ENCODE measurements at regions of chr14 and their contacts with region 1.

Region 1: GRCh38 chr14:20970983-20971704 is 15.9 kb downstream of the RNASE2 start:
- DNase-seq: peak; percentile 65 to 80 (median 72)
- H3K4me3 ChIP-seq: peak overlapping the region; percentile 91
- H3K4me3 Mint-ChIP-seq: peak overlapping the region; percentile 89 to 95 (median 93)
- H3K27ac ChIP-seq: no peak overlapping the region
- H3K27ac Mint-ChIP-seq: peak overlapping the region in 7 of 8 donors; percentile 13 to 84 (median 76)
- H3K4me1 ChIP-seq: peaks cover 6% of the 10 kb centered on the region
- H3K4me1 Mint-ChIP-seq: peaks cover 13 to 17% (median 14%) of the 10 kb centered on the region in 3 donors
- H3K27me3 ChIP-seq: no peaks in the 10 kb centered on the region
- H3K27me3 Mint-ChIP-seq: peaks cover 28 to 45% of the 10 kb centered on the region in 2 donors

Region 2: GRCh38 chr14:20690848-20691523 is 280.2 kb before region 1 on chr14:
- CTCF ChIA-PET with region 1: interaction called, 12 read pairs
- POLR2A ChIA-PET with region 1: no interaction called
- DNase-seq: peak in 4 of 5 donors; percentile 18 to 65 (median 54)
- H3K4me3 ChIP-seq: no peak overlapping the region
- H3K4me3 Mint-ChIP-seq: peak overlapping the region in 1 of 7 donors; percentile 7
- H3K27ac ChIP-seq: no peak overlapping the region
- H3K27ac Mint-ChIP-seq: peak overlapping the region in 1 of 8 donors; percentile 12
- H3K4me1 ChIP-seq: no peaks in the 10 kb centered on the region
- H3K4me1 Mint-ChIP-seq: peaks cover 4 to 6% (median 5%) of the 10 kb centered on the region in 3 donors
- H3K27me3 ChIP-seq: no peaks in the 10 kb centered on the region
- H3K27me3 Mint-ChIP-seq: peaks cover 7 to 8% of the 10 kb centered on the region in 2 donors

Region 3: DNA sequence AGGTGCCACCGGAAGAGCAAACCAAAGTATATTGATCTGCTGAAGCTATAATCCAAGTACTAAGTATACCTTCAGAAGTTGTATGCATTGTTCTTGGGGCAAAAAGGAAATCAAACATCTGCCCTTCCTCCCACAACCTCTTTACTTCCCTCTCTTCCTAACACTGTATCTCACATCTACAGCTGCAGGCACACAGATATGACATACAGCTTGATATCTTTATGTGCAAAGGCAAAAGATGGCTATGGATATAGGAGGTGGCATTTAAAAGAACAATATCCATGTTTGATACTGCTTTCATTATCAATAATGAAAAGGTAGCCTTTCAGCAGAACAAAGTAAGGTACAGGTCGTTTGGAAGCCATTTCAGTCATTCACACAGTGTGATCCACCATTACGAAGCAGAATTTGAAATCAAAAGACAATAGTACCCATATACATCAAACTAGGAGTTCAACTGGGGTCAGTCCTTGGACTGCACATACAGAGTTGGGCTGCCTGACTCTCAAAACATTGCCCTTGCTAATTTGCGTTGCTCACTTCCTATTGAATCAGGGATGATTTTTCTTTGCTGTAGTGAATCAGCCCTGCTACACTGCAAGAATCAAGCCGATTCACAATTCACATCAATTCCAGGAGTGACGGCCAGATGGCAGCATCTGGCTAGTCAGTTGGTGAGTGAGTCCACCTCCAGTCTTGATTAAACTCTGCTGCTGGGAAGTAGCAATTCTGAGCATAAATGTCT is 273.7 kb before region 1 on chr14:
- CTCF ChIA-PET with region 1: interaction called, 12 read pairs
- POLR2A ChIA-PET with region 1: no interaction called
- DNase-seq: peak; percentile 41 to 68 (median 44)
- H3K4me3 ChIP-seq: no peak overlapping the region
- H3K4me3 Mint-ChIP-seq: no peak overlapping the region
- H3K27ac ChIP-seq: no peak overlapping the region
- H3K27ac Mint-ChIP-seq: no peak overlapping the region
- H3K4me1 ChIP-seq: no peaks in the 10 kb centered on the region
- H3K4me1 Mint-ChIP-seq: no peaks in the 10 kb centered on the region
- H3K27me3 ChIP-seq: no peaks in the 10 kb centered on the region
- H3K27me3 Mint-ChIP-seq: peaks cover 5 to 9% of the 10 kb centered on the region in 2 donors

Region 4: GRCh38 chr14:20857630-20858261 is 113.4 kb before region 1 on chr14:
- CTCF ChIA-PET with region 1: interaction called, 26 read pairs
- POLR2A ChIA-PET with region 1: no interaction called
- DNase-seq: peak; percentile 49 to 74 (median 62)
- H3K4me3 ChIP-seq: no peak overlapping the region
- H3K4me3 Mint-ChIP-seq: no peak overlapping the region
- H3K27ac ChIP-seq: no peak overlapping the region
- H3K27ac Mint-ChIP-seq: peak overlapping the region in 1 of 8 donors; percentile 16
- H3K4me1 ChIP-seq: no peaks in the 10 kb centered on the region
- H3K4me1 Mint-ChIP-seq: peaks cover 0 to 5% (median 5%) of the 10 kb centered on the region in 3 donors
- H3K27me3 ChIP-seq: peaks cover 5% of the 10 kb centered on the region
- H3K27me3 Mint-ChIP-seq: peaks cover 14 to 45% of the 10 kb centered on the region in 2 donors

Region 5: GRCh38 chr14:20956376-20956976 is 14.7 kb before region 1 on chr14:
- CTCF ChIA-PET with region 1: interaction called, 52 read pairs
- POLR2A ChIA-PET with region 1: no interaction called
- DNase-seq: peak in 1 of 5 donors; percentile 11
- H3K4me3 ChIP-seq: no peak overlapping the region
- H3K4me3 Mint-ChIP-seq: no peak overlapping the region
- H3K27ac ChIP-seq: no peak overlapping the region
- H3K27ac Mint-ChIP-seq: no peak overlapping the region
- H3K4me1 ChIP-seq: peaks cover 5% of the 10 kb centered on the region
- H3K4me1 Mint-ChIP-seq: peaks cover 7 to 25% (median 18%) of the 10 kb centered on the region in 3 donors
- H3K27me3 ChIP-seq: no peaks in the 10 kb centered on the region
- H3K27me3 Mint-ChIP-seq: peaks cover 14 to 51% of the 10 kb centered on the region in 2 donors

Region 6: DNA sequence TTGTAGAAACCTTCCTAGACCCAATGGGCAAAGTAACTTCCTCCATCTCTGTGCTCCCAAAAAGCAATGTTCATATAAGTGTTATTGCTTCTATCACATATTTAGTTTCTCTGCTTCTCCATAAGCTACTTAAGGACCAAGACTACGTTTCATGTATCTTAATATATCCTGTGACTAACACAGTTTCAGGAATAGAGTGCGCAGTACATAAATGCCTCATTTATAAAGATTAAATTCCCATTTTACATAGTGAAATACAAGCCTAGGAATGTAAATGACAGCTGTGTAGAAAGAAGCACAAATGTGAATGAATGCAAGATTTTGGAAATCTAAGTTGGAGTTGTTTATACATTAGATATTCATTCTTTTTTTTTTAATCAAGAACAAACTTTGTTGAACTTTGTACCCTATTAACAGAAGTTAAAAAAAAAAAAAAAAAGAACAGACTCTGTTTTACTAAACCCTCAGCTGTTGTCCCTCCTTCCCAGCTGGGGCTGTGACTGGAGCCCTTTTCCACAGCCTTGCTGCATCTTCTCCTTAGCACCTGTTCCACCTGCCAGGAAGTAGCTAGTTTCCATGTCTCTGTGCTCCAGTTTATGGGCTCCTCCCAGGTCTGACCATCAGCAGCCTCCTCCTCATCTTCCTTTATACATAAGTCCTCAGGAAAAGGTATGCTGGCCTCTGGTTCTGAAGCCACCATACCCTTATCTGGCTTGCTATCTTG is 11.7 kb after region 1 on chr14:
- CTCF ChIA-PET with region 1: interaction called, 41 read pairs
- POLR2A ChIA-PET with region 1: no interaction called
- DNase-seq: no peak
- H3K4me3 ChIP-seq: no peak overlapping the region
- H3K4me3 Mint-ChIP-seq: no peak overlapping the region
- H3K27ac ChIP-seq: no peak overlapping the region
- H3K27ac Mint-ChIP-seq: no peak overlapping the region
- H3K4me1 ChIP-seq: no peaks in the 10 kb centered on the region
- H3K4me1 Mint-ChIP-seq: no peaks in the 10 kb centered on the region
- H3K27me3 ChIP-seq: peaks cover 3% of the 10 kb centered on the region
- H3K27me3 Mint-ChIP-seq: peaks cover 3 to 29% of the 10 kb centered on the region in 2 donors

Region 7: GRCh38 chr14:20998664-20999366 is 27.7 kb after region 1 on chr14 and contains the start of gene SLC39A2:
- CTCF ChIA-PET with region 1: interaction called, 15 read pairs
- POLR2A ChIA-PET with region 1: no interaction called
- DNase-seq: no peak
- H3K4me3 ChIP-seq: no peak within 1 kb of the TSS
- H3K4me3 Mint-ChIP-seq: no peak within 1 kb of the TSS
- H3K27ac ChIP-seq: no peak within 1 kb of the TSS
- H3K27ac Mint-ChIP-seq: peak within 1 kb of the TSS in 4 of 8 donors; percentile 24 to 85 (median 30)
- H3K4me1 ChIP-seq: peaks cover 7% of the 10 kb centered on the region
- H3K4me1 Mint-ChIP-seq: peaks cover 0 to 1% (median 0%) of the 10 kb centered on the region in 3 donors
- H3K27me3 ChIP-seq: no peaks in the 10 kb centered on the region
- H3K27me3 Mint-ChIP-seq: peaks cover 0 to 2% of the 10 kb centered on the region in 2 donors
- total RNA-seq, gene SLC39A2: 0.16 TPM in 1 of 2 experiments, not detected in the other

Measured in CD8-positive, alpha-beta memory T cell (primary cell).